Activated T-helper 2 cell treated with anti-CD3 and anti-CD28 coated beads, Interferon-gamma antibody, Interleukin-2, Interleukin-4, amounts not matched to agents 10 μg/mL and 5 μg/mL and 100 μg/mL, durations not matched to agents 14 hours and 24 hours and 36 hours (primary cell): ENCODE measurements at regions of chr1 and their contacts with region 1.

Region 1: DNA sequence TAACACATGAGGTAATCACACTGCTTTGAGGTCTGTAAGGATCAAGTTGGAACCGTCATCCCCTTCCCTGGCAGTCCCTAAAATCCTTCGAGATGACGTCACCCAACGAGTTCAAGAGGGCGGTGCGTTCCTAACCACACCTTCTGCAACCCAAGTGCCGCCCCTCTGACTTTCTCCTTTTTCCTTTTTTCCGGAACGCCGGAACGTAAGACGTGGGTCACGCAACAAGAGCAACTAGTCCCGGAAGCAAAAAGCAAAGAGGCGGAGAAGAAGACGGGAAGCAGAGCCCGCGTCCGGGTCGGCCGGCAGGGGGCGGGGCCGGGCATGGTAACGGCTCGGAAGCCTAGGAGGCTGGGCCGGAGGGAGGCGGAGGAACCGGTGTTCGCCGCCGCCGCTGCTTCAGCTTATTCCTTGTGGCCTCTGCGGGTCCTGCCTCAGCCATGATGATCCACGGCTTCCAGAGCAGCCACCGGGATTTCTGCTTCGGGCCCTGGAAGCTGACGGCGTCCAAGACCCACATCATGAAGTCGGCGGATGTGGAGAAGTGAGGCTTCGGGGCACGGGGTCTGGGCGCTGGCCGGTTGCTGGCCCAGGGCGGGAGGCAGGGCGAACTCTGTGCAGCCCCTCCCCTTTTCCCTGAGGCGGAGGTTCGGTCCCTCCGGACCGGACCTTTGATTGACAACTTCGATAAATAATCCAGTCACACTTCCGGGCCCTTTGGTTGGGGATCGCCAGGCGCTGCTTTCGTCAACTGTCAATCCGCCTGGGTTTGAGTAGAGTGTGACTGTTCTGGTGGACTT is at the start of gene TIPRL:
- DNase-seq: peak; percentile 93
- H3K4me3 Mint-ChIP-seq: no peak within 1 kb of the TSS
- H3K27ac Mint-ChIP-seq: no peak within 1 kb of the TSS
- H3K4me1 Mint-ChIP-seq: peaks cover 8% of the 10 kb centered on the region
- H3K27me3 Mint-ChIP-seq: peaks cover 4% of the 10 kb centered on the region
- total RNA-seq, gene TIPRL: 59.9 and 63.4 TPM in 2 replicates

Region 2: DNA sequence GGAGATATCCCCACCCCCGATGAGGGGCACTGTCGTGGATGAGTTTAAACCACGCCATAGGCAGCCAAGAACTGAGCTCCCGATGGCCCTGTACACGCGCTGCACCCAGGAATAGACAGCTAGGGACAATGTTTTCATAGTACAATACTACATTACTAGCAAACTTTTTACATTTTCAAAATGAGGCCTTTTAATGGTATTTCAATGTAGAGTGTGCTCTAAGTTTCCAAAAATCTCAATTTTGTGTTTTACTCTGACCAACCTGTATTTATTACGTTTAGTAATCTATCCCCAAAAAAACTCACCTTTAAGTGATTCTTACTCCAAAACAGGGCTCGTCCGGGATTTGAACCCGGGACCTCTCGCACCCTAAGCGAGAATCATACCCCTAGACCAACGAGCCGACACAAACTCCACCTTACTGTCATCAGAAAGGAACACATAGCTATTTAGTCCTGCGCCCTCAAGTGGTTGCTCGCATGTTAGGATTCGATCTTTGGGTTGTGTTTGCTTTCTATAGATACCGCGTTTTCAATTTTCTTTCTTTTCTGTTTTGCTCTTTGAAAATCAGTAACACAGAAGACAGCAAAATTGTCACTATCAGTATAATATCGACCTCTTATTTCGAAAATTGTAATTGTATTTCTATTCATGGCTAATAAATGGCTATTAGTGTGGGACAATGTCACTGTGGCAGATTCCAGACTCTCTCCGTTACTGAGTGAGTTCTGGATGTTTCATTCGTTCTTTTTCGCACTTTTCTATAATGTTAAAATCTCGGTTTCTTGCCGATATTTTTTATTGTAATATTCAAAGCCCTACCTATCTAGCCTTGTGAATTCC is 463.5 kb before region 1 on chr1:
- intact Hi-C with region 1: loop called (anchors 5 kb)
- DNase-seq: peak; percentile 83
- H3K4me3 Mint-ChIP-seq: peak overlapping the region; percentile 87
- H3K27ac Mint-ChIP-seq: peak overlapping the region; percentile 87
- H3K4me1 Mint-ChIP-seq: peaks cover 29% of the 10 kb centered on the region
- H3K27me3 Mint-ChIP-seq: peaks cover 4% of the 10 kb centered on the region

Region 3: DNA sequence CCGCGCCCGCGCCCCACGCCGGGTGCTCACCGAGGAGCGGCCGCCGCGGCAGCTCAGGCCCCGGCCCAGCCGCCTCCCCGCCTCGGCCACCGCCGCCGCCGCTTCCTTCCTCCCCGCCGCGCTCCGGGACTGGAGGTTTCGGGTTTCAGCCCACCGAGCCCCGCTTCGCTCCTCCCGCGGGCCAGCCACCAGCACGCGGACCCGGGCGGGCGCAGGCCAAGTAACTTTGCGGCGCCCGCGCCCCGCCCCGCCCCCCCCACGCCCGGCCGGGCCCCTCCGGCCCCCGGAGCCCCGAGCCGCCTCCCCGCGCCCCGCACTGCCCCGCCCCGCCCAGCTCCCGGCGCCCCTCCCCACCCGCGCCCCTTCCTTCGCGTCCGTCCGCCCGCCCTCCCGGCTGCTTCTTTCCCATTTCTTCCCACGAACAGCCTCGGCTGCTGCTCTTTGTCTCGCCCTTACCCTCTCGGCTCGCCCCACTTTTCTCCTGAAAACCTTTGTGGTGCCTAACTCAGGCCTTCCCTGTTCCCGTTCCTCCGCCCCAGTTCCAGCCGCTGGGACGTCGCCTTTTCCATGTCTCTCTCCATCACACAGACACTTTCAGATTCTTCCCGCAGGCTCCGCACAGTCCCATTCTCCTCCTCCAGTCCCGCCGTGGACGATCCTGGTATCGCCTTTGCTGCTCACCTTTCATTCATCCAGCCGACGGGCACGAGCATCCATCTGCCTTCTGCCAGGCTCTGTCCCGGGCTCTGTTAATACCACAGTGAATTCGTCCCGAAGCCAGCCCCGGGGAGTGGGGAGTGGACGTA is 41.9 kb before region 1 on chr1 and contains the start of gene GPR161:
- intact Hi-C with region 1: loop called (anchors 2 kb)
- DNase-seq: peak; percentile 29
- H3K4me3 Mint-ChIP-seq: peak within 1 kb of the TSS; percentile 85
- H3K27ac Mint-ChIP-seq: peak within 1 kb of the TSS; percentile 33
- H3K4me1 Mint-ChIP-seq: peaks cover 16% of the 10 kb centered on the region
- H3K27me3 Mint-ChIP-seq: peaks cover 48% of the 10 kb centered on the region
- total RNA-seq, gene GPR161: 1.3 and 2.4 TPM in 2 replicates

Region 4: DNA sequence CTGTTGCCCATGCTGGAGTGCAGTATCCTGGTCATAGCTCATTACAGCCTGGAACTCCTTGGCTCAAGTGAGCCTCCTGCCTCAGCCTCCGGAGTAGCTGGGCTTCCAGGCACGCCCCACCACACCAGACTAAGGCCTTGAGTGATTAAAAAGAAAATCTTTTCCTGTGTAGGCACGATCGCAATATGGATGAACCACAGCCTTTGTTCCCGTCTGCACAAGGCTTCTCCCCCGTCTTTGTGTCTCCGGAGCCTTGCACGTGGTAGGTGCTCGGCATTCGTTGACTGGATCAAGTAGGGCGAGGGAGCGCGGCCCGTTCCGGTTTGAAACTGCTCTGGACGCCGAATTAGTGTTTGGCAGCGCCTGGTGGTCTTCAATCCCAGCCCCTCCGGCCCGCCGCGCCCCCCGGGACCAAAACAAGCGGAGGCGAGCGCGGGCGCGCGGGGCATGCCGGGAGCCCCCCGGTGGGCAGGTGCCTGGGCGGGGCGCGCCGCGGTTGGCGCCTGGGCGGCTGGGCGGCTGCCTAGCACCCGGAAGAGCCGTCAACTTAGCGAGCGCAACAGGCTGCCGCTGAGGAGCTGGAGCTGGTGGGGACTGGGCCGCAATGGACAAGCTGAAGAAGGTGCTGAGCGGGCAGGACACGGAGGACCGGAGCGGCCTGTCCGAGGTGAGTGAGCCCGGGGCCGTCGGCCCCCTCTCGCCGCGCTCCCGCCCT is 46.8 kb after region 1 on chr1 and contains the start of gene SFT2D2:
- intact Hi-C with region 1: loop called (anchors 1 kb)
- DNase-seq: peak; percentile 77
- H3K4me3 Mint-ChIP-seq: peak within 1 kb of the TSS; percentile 98
- H3K27ac Mint-ChIP-seq: peak within 1 kb of the TSS; percentile 96
- H3K4me1 Mint-ChIP-seq: peaks cover 51% of the 10 kb centered on the region
- H3K27me3 Mint-ChIP-seq: no peaks in the 10 kb centered on the region
- total RNA-seq, gene SFT2D2: 106 and 119 TPM in 2 replicates

Region 5: DNA sequence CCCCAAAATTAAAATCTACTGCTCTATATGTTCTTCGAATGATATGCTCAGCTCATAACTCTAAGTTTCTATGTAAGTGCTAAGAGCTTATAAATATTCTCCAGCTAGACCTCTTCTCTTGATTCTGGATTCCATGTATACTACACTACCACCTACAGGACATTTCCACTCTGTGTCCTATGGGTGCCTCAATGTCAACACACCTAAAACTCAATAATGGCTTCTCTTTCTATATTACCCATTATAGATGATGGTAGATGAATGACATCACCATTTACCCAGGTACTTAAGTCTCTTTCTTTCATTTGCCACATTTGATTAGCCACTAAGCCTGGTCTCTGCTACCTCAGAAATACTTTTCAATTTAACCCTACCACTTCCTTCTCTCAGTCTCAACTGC is 143.1 kb after region 1 on chr1:
- intact Hi-C with region 1: loop called (anchors 5 kb)
- DNase-seq: no peak
- H3K4me3 Mint-ChIP-seq: no peak overlapping the region
- H3K27ac Mint-ChIP-seq: peak overlapping the region; percentile 8
- H3K4me1 Mint-ChIP-seq: peaks cover 47% of the 10 kb centered on the region
- H3K27me3 Mint-ChIP-seq: no peaks in the 10 kb centered on the region

Region 6: DNA sequence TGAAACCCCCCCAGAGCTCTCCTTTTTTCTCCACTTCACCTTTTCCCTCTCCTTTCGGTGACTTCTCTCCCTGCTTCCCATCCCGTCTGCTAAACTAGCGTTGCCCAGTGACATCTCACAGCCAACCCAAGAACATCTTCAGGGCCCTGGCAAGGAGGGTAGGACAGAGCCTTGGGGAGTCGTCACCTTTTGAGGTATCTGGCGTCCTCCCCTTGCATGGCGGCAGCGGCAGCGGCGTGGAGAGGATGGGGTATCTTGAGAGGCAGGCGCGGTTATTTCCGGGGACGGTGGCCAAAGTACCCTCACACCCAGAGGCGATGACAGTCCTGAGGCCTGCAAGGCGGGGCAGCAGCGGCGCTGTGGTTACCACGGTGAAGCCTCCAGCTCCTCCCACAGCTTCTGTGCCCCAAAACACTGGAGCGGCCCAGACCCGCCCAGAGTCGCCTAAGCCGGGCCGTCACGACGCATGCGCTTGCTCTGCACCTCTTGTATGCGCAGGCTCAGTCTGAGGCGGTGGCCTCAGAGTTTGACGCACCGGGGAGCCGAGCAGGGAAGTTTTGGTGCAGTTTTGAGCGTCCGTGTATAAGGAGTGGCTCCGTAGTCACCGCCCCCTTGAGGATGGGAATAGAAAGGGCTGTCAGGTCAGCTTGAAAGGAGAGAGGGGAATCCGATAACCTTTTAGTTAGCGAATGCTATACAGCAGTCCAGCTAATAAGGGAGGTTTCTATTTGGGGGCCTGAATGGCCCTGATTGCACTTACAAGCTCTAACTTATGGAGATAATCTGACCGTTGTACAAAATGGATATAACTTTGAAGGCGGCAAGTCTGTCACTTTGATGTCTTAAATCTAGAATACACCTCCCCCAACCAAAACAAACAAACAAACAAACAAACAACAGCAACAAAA is 1895.7 kb after region 1 on chr1 and contains the start of gene KIFAP3:
- intact Hi-C with region 1: loop called (anchors 10 kb)
- DNase-seq: peak; percentile 96
- H3K4me3 Mint-ChIP-seq: peak within 1 kb of the TSS; percentile 96
- H3K27ac Mint-ChIP-seq: peak within 1 kb of the TSS; percentile 94
- H3K4me1 Mint-ChIP-seq: peaks cover 28% of the 10 kb centered on the region
- H3K27me3 Mint-ChIP-seq: no peaks in the 10 kb centered on the region
- total RNA-seq, gene KIFAP3: 15.1 and 15.5 TPM in 2 replicates